ENCODE measurements at regions of chr13 and their contacts with region 1.

Region 1: GRCh38 chr13:73835138-73835721 is 299.0 kb downstream of the KLF12 start:
- DNase-seq: peak; percentile 61
- H3K4me3 Mint-ChIP-seq: no peak overlapping the region
- H3K27ac Mint-ChIP-seq: no peak overlapping the region
- H3K4me1 Mint-ChIP-seq: peaks cover 5% of the 10 kb centered on the region
- H3K27me3 Mint-ChIP-seq: no peaks in the 10 kb centered on the region
- CTCF ChIP-seq: peak; percentile 58

Region 2: GRCh38 chr13:73849292-73849691 is 14.1 kb after region 1 on chr13:
- CTCF ChIA-PET with region 1: interaction called, 11 read pairs
- POLR2A ChIA-PET with region 1: no interaction called
- intact Hi-C with region 1: no loop called
- DNase-seq: peak; percentile 34
- H3K4me3 Mint-ChIP-seq: no peak overlapping the region
- H3K27ac Mint-ChIP-seq: peak overlapping the region; percentile 16
- H3K4me1 Mint-ChIP-seq: no peaks in the 10 kb centered on the region
- H3K27me3 Mint-ChIP-seq: no peaks in the 10 kb centered on the region
- CTCF ChIP-seq: peak; percentile 18

Region 3: DNA sequence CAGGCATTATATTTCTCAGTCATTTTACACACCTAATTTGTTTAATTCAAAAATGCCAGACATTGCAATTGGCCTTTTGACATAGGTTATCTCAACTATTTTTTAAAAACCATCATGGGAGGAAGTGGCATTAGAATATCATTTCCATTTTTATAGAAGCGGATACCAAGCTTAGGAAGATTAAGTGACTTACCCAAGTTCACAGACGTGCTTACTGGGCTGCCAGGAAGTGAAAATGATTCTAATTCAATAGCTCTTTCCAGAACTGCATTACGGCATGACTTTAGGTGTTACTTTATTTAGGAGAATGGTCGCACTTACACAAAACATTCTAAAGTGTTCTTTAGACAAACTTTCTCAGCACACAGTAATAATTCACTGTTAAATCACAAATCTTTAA is 67.1 kb after region 1 on chr13:
- CTCF ChIA-PET with region 1: no interaction called
- POLR2A ChIA-PET with region 1: no interaction called
- intact Hi-C with region 1: no loop called
- DNase-seq: no peak
- H3K4me3 Mint-ChIP-seq: no peak overlapping the region
- H3K27ac Mint-ChIP-seq: no peak overlapping the region
- H3K4me1 Mint-ChIP-seq: no peaks in the 10 kb centered on the region
- H3K27me3 Mint-ChIP-seq: no peaks in the 10 kb centered on the region
- CTCF ChIP-seq: no peak

Region 4: GRCh38 chr13:73981595-73981994 is 146.4 kb after region 1 on chr13:
- CTCF ChIA-PET with region 1: no interaction called
- POLR2A ChIA-PET with region 1: no interaction called
- intact Hi-C with region 1: no loop called
- DNase-seq: no peak
- H3K4me3 Mint-ChIP-seq: no peak overlapping the region
- H3K27ac Mint-ChIP-seq: no peak overlapping the region
- H3K4me1 Mint-ChIP-seq: no peaks in the 10 kb centered on the region
- H3K27me3 Mint-ChIP-seq: no peaks in the 10 kb centered on the region
- CTCF ChIP-seq: no peak

Measured in MCF 10A (cell line).